Activated naive CD4-positive, alpha-beta T cell treated with anti-CD3 and anti-CD28 coated beads for 36 hours (primary cell): ENCODE measurements at regions of chr2 and their contacts with region 1.

Region 1: DNA sequence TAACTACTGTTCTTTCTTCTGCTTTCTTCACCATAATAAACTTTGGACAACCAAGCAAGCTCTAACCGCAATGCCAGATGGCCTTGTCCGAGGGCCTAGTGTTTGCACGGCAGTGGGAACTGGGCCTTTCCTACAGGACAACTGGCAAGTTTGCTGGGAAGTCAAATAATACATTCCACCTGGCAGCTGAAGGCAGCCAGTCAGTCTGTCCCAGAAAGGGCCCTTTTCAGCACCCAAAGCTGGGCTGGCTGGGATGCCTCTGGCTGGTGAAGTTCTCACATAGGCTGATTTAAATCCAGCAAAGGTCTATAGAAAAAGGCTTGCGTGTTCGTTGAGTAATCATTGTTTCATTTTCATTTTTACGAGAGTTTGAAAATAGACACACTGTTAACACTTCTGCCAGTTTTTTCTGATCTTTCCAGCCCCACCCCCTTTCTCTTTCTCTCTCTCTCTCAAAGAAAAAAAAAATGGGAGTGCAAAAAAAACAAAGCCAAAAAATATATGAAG is 110.0 kb upstream of the EPAS1 start:
- DNase-seq: peak; percentile 70
- H3K4me3 Mint-ChIP-seq: peak overlapping the region; percentile 35
- H3K27ac Mint-ChIP-seq: peak overlapping the region; percentile 86
- H3K4me1 Mint-ChIP-seq: peaks cover 18% of the 10 kb centered on the region
- H3K27me3 Mint-ChIP-seq: peaks cover 2% of the 10 kb centered on the region

Region 2: DNA sequence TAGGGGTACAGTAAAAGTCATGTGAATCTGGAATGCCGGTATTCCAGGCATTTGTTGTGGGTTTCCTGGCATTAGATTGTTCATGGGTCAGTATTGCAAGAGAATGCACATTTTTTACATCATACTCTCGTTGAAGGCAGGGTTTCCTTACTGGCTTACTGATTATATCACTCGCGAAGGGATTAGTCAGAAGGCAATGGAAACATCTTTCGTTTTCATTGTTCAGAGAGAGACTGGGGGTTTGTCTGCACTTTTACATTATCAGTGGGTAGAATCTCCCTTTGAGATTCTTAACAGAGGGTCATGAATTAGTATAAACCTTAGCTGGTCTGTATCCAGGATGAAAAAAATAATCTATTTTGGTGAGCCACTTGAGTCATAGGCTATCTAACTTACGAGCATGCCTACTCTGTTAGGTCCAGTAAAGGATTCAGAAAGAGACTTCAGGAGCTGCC is 119.3 kb before region 1 on chr2:
- CTCF ChIA-PET with region 1: interaction called, 8 read pairs
- intact Hi-C with region 1: loop called (anchors 5 kb)
- DNase-seq: no peak
- H3K4me3 Mint-ChIP-seq: no peak overlapping the region
- H3K27ac Mint-ChIP-seq: no peak overlapping the region
- H3K4me1 Mint-ChIP-seq: peaks cover 12% of the 10 kb centered on the region
- H3K27me3 Mint-ChIP-seq: no peaks in the 10 kb centered on the region